A549 (cell line): ENCODE measurements at regions of chr11 and their contacts with region 1.

Region 1: DNA sequence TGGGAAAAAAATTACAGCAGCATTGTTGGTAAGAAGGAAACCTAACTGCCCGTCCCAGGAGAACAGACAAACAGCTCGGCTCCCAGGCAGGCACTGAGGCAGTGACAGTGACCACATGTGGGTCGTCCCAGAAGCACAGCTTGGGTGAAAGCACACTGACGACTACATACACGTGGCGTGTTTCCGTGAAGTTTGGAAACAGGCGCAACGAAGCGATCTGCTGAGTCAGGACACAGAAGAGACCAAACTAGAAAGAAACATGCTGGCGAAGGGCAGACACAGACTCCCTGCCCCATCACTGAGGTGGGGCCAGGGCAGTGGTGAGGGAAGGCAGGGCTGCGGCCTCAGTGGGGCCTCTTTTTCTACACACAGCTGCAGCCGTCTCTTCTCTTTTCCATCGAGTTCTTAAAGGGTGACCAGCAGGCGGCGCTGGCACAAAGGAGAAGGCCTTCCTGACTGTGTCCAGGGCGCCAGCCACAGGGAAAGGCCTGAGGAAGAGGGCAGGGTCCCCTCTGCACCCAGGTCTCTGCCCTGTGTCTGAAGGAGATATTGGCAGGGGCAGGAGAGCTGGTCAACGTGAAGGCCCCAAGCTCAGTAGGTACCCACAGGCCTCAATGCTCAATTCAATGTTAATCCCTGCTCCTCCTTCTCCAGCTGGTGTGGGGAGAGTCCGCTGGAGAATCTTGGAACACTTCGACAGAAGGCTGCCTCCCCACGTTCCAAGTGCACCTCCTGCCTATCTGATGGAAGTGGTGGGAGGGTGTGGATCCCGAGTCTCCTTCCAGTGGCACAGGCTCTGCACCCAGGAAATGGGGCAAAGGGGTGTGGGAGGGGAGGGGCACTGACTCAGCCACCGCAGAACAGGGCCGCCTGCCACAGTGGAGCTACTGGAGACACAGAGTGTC is 19.9 kb downstream of the CARS1 start:
- DNase-seq: peak; percentile 75 to 76
- ATAC-seq: peak; percentile 84 to 98
- H3K4me3 ChIP-seq: no peak overlapping the region
- H3K27ac ChIP-seq: no peak overlapping the region
- H3K4me1 ChIP-seq: no peaks in the 10 kb centered on the region
- CTCF ChIP-seq: peak; percentile 87
- EP300 ChIP-seq: no peak
- POLR2A ChIP-seq: no peak
- RAD21 ChIP-seq: peak; percentile 73 to 89

Region 2: GRCh38 chr11:3014057-3014938 is 23.0 kb before region 1 on chr11:
- CTCF ChIA-PET with region 1: interaction called, 30 read pairs
- POLR2A ChIA-PET with region 1: no interaction called
- DNase-seq: no peak
- ATAC-seq: no peak
- H3K4me3 ChIP-seq: no peak overlapping the region
- H3K27ac ChIP-seq: no peak overlapping the region
- H3K4me1 ChIP-seq: no peaks in the 10 kb centered on the region
- CTCF ChIP-seq: no peak
- EP300 ChIP-seq: no peak
- POLR2A ChIP-seq: no peak
- RAD21 ChIP-seq: no peak

Region 3: GRCh38 chr11:3021125-3021524 is 16.2 kb before region 1 on chr11:
- CTCF ChIA-PET with region 1: interaction called, 88 read pairs
- POLR2A ChIA-PET with region 1: no interaction called
- DNase-seq: peak; percentile 52 to 60
- ATAC-seq: peak; percentile 68 to 89; a peak in 5 of 6 replicates
- H3K4me3 ChIP-seq: no peak overlapping the region
- H3K27ac ChIP-seq: no peak overlapping the region
- H3K4me1 ChIP-seq: peaks cover 8% of the 10 kb centered on the region; the same call in 1 of the 3 replicates
- CTCF ChIP-seq: peak; percentile 32; the same call in 1 of the 3 replicates
- EP300 ChIP-seq: no peak
- POLR2A ChIP-seq: no peak
- RAD21 ChIP-seq: peak; percentile 25 to 63; a peak in 3 of 5 replicates

Region 4: DNA sequence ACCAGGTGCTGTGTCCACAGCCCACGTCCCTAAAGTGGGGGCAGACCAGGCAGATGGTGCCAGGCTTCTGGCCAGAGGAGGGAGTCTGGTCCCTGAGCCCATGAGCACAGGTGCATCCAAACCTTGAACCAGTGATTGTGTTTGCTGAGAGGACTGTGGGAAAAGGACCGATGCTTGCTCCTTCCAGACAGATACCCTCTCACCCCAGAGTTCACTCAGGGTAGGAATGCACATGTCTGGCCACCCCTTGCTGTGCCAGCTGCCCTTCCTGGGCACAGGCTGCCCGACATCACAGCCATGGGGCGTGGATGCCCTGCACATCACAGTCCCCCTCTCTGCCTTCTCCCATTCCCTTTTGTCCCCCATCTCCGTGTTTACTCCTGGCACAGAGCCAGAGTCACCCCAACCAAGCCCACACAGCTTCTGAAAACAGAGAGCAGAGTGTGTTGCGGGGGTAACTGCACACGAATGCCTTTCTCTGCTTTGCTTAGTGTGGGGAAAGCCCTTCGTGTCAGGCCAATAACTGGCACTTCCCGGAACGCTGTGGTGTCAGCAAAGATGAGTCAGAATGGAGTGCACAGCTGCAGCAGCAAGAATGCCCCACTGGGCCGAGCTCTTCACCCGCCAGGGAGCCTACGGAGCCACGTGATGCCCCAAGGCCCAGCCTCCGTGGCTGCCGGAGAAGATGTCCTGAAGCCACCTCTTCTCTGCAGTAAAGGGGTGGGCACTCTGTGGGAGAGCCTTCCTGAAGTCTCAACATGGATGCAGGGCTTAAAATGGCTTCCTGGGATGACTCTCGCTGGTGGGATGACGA is 12.3 kb after region 1 on chr11:
- CTCF ChIA-PET with region 1: interaction called, 116 read pairs
- POLR2A ChIA-PET with region 1: no interaction called
- DNase-seq: peak; percentile 77 to 90
- ATAC-seq: peak; percentile 94 to 96
- H3K4me3 ChIP-seq: no peak overlapping the region
- H3K27ac ChIP-seq: peak overlapping the region; percentile 38 to 79; a peak in 4 of 6 replicates
- H3K4me1 ChIP-seq: peaks cover 35% of the 10 kb centered on the region
- CTCF ChIP-seq: peak; percentile 16; the same call in 1 of the 3 replicates
- EP300 ChIP-seq: no peak
- POLR2A ChIP-seq: no peak
- RAD21 ChIP-seq: peak in 1 of 2 experiments; percentile 35; a peak in 2 of 5 replicates

Region 5: GRCh38 chr11:3057069-3057963 is 20.0 kb after region 1 on chr11 and contains the start of gene CARS1:
- CTCF ChIA-PET with region 1: interaction called, 116 read pairs
- POLR2A ChIA-PET with region 1: no interaction called
- DNase-seq: peak; percentile 92 to 94
- ATAC-seq: peak; percentile 99
- H3K4me3 ChIP-seq: peak within 1 kb of the TSS; percentile 83
- H3K27ac ChIP-seq: peak within 1 kb of the TSS; percentile 98 to 99
- H3K4me1 ChIP-seq: peaks cover 29% of the 10 kb centered on the region
- CTCF ChIP-seq: no peak
- EP300 ChIP-seq: no peak
- POLR2A ChIP-seq: peak; percentile 53
- RAD21 ChIP-seq: no peak
- polyA plus RNA-seq, gene CARS1: 109 and 130 TPM in 2 replicates

Region 6: GRCh38 chr11:3073029-3073435 is 35.7 kb after region 1 on chr11:
- CTCF ChIA-PET with region 1: interaction called, 11 read pairs
- POLR2A ChIA-PET with region 1: no interaction called
- DNase-seq: no peak
- ATAC-seq: no peak
- H3K4me3 ChIP-seq: no peak overlapping the region
- H3K27ac ChIP-seq: no peak overlapping the region
- H3K4me1 ChIP-seq: no peaks in the 10 kb centered on the region
- CTCF ChIP-seq: no peak
- EP300 ChIP-seq: no peak
- POLR2A ChIP-seq: no peak
- RAD21 ChIP-seq: no peak

Region 7: DNA sequence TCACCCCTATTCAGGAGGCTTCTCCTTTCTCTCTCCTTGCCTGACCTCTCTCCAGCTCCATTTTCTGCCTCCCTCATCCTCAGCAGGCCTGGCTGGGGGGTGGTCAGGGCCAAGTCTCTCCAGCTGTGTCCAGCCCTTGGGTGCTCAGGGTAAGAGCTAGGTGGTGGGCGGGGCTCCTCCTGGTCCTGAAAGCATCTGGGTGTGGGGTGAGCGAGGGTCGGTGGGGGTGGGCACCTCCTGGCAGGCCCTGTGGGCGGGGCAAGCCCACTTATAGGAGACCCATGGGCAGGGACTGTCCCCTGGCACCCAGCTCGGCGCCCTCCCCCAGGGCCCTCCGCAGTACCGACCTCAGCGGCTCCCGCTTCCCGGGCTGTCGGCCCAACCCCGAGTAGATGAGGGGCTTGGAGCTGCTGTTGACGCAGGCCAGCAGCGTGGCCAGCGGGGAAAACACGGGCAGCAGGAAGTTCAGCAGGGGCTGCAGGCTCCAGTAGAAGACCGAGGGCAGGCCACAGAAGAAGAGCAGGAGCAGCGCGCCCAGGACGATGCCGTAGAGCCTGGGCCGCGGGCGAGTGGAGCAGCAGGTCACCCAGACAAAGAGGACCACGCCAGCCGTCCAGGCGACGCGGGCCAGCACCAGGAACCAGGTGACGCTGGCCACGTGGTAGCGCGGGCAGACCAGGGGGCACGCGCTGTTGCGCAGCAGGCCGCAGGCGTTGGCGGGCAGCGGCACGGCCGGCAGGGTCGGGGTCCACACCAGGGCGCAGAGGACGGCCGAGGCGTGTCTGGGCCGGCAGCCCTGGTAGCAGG is 180.6 kb after region 1 on chr11:
- CTCF ChIA-PET with region 1: interaction called, 10 read pairs
- POLR2A ChIA-PET with region 1: no interaction called
- DNase-seq: no peak
- ATAC-seq: peak; percentile 6 to 16; a peak in 3 of 6 replicates
- H3K4me3 ChIP-seq: no peak overlapping the region
- H3K27ac ChIP-seq: no peak overlapping the region
- H3K4me1 ChIP-seq: peaks cover 5% of the 10 kb centered on the region; the same call in 1 of the 3 replicates
- CTCF ChIP-seq: no peak
- EP300 ChIP-seq: no peak
- POLR2A ChIP-seq: no peak
- RAD21 ChIP-seq: no peak